Body of pancreas (tissue), 4 donors: ENCODE measurements at regions of chr11 and their contacts with region 1.

Region 1: GRCh38 chr11:124329787-124330478 is 9.9 kb upstream of the OR8D2 start:
- DNase-seq: no peak
- ATAC-seq: no peak
- H3K4me3 ChIP-seq: no peak overlapping the region
- H3K27ac ChIP-seq: no peak overlapping the region
- H3K4me1 ChIP-seq: no peaks in the 10 kb centered on the region
- H3K27me3 ChIP-seq: no peaks in the 10 kb centered on the region
- CTCF ChIP-seq: peak in 5 of 7 experiments; percentile 7 to 41 (median 29)
- POLR2A ChIP-seq: no peak

Region 2: DNA sequence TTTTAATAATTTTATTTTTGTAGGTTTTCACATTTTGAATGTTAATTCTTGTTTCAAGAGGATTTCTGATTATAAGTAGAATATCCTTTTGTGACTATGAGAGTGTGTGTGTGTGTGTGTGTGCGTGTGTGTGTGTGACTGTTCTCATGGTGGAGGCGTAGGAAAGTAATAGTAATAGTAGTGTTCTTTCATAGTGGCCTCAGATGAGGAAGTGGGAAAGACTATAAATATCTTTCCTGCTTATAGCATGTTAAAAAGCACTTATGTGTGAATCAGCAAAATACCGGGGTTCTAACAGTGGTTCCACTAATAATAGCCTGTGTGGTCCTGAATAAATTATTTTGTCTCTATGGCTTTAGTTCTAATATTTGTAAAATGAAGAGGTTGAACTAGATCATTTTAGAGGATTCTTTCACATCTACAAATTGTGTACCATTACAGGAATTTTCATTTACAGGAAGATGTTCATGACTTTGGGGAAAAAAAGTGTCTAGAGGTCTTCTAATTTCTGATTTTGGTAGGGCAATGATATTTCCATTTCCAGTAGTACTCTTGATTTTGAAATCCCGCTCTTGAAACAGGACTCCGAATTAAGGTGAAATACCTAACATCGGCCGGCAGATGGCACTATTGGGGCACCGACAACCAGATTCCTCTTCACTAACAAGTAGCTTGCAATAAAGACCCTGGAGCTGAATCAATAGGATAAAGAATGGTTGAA is 258.9 kb before region 1 on chr11:
- intact Hi-C with region 1: loop called (anchors 10 kb)
- DNase-seq: peak; percentile 64 to 67 (median 66)
- ATAC-seq: peak; percentile 38
- H3K4me3 ChIP-seq: no peak overlapping the region
- H3K27ac ChIP-seq: no peak overlapping the region
- H3K4me1 ChIP-seq: no peaks in the 10 kb centered on the region
- H3K27me3 ChIP-seq: no peaks in the 10 kb centered on the region
- CTCF ChIP-seq: peak; percentile 42 to 80 (median 69)
- POLR2A ChIP-seq: no peak

Region 3: DNA sequence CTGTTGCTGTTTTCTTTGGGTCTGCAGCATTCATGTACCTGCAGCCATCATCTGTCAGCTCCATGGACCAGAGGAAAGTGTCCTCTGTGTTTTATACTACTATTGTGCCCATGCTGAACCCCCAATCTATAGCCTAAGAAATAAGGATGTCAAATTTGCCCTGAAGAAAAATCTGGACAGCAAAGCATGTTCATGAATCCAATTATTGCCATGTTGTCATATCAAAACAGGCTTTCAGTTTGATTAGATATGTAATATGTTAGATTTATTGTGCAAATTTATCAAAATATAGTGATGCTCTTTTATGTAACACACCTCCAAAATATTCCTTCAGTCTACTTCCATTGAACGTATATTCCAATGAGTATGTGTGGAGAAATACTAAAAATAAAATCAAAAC is 104.5 kb before region 1 on chr11:
- intact Hi-C with region 1: no loop called
- DNase-seq: no peak
- ATAC-seq: no peak
- H3K4me3 ChIP-seq: no peak overlapping the region
- H3K27ac ChIP-seq: no peak overlapping the region
- H3K4me1 ChIP-seq: peaks cover 7% of the 10 kb centered on the region
- H3K27me3 ChIP-seq: no peaks in the 10 kb centered on the region
- CTCF ChIP-seq: no peak
- POLR2A ChIP-seq: no peak

Region 4: DNA sequence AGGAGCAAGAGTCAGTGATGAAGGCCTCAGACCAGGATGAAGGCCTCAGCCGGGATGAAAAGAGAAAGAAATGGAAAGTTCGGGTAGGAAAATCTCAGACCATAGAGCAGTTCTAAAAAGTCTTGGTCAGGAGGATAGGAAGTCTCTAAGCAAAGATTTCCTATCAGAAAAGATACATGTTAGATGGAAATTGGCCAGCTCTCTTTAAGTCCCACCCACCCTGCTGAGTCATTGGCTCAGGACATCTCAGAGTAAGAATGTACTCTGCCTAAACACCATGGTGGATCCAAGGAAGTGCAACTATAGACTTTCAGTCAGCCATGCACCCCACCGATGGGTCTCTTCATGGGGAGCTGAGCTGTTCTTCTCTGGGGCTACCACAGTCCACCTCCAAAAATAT is 64.5 kb after region 1 on chr11:
- intact Hi-C with region 1: no loop called
- DNase-seq: no peak
- ATAC-seq: no peak
- H3K4me3 ChIP-seq: no peak overlapping the region
- H3K27ac ChIP-seq: no peak overlapping the region
- H3K4me1 ChIP-seq: no peaks in the 10 kb centered on the region
- H3K27me3 ChIP-seq: no peaks in the 10 kb centered on the region
- CTCF ChIP-seq: no peak
- POLR2A ChIP-seq: no peak